ENCODE measurements at regions of chr3 and their contacts with region 1.

Region 1: GRCh38 chr3:157081681-157082210 is 78.2 kb downstream of the CCNL1 start:
- DNase-seq: peak; percentile 85
- H3K4me3 Mint-ChIP-seq: no peak overlapping the region
- H3K27ac Mint-ChIP-seq: no peak overlapping the region
- H3K4me1 Mint-ChIP-seq: peaks cover 46% of the 10 kb centered on the region
- H3K27me3 Mint-ChIP-seq: no peaks in the 10 kb centered on the region

Region 2: DNA sequence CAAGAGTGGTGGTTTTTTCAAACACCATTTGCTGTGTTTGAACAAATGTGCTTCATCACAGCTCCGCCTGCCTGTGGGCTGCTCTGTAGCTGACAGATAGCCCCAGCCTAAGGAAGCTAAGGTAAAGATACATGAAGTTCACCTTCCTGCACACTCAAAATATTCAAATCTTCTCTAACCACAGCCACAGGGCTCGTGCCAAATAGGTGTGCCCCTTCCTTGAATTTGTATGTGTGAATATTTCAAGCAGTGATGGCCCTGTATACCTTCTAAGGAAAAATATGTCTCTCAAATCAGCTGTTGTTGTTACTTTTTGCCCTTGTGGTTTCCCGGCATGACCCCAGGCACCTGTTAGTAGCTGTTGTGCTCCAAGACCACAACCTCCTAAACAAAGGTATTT is 14.6 kb before region 1 on chr3:
- CTCF ChIA-PET with region 1: interaction called, 11 read pairs
- POLR2A ChIA-PET with region 1: interaction called, 6 read pairs
- DNase-seq: peak; percentile 62
- H3K4me3 Mint-ChIP-seq: no peak overlapping the region
- H3K27ac Mint-ChIP-seq: peak overlapping the region; percentile 47
- H3K4me1 Mint-ChIP-seq: peaks cover 30% of the 10 kb centered on the region
- H3K27me3 Mint-ChIP-seq: peaks cover 3% of the 10 kb centered on the region

Region 3: DNA sequence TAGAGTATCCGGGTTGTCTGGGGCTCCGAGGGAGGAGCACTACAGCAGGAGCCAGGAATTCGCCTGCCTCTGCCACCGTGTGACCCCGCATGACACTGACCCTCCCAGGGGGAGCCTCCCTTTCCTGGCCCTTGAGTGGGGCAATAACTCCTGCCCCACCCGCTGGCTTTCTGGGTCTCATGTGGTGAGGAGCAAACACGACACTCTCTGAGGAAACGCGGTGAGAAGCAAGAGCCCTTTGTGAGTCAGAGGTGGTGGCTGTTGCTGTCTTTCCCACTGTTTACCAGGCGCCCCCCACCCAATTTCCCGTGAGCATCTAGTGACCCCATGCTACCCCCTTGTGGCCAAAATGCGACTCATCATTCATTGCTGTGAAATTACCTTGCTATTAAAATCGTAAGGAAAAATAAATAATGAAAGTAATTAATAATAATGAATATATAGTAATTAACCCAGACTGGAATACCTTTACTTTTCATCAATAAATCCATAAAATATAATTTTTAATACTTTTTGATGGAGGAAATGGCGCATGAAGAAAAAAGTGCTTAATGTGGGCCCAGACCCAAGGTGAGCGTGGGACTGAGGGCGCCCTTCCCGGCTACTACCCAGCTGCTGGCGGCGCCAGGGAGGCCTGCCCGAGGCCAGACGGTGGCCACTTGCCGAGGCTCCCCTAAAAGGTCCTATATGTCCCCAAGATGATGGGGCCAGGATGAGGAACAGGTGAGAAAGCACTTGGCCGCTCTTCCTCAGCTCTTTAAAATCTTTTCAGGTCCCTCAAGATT is 48.9 kb after region 1 on chr3:
- CTCF ChIA-PET with region 1: interaction called, 92 read pairs
- POLR2A ChIA-PET with region 1: interaction called, 381 read pairs
- DNase-seq: peak; percentile 82
- H3K4me3 Mint-ChIP-seq: peak overlapping the region; percentile 60
- H3K27ac Mint-ChIP-seq: peak overlapping the region; percentile 99
- H3K4me1 Mint-ChIP-seq: peaks cover 88% of the 10 kb centered on the region
- H3K27me3 Mint-ChIP-seq: no peaks in the 10 kb centered on the region

Region 4: DNA sequence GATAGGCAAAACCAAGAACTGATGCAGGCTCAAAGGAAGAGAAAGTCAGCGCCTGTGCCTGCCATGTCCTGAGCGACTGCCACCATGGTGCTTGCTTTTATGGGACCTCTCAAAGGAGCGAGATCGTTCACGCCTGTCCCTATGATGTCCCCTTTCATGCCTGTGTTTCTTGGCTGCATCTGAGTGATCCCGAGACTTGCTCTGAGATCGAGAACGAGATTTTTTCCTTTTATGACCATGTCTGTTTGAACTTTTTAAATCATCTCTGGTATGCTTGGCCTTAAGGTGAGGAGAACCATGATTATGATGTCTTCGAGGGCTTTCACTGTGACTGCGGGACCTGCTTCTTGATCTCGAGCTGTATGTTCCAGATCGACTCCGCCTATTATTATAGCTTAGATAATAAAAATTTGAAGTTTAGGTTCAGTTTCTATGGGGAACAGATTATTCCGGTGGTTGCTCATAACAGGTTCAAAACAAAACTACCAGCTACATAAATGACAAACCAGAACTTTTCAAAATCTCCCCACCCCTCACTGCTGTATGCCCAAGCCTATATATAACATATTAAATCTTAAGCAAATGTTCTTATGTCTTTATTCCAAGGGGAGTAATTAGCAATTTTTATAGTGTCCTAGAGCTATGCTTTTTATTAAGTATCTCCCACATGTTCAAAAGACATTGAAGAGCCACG is 66.6 kb after region 1 on chr3:
- CTCF ChIA-PET with region 1: no interaction called
- POLR2A ChIA-PET with region 1: no interaction called
- DNase-seq: no peak
- H3K4me3 Mint-ChIP-seq: no peak overlapping the region
- H3K27ac Mint-ChIP-seq: peak overlapping the region; percentile 54
- H3K4me1 Mint-ChIP-seq: peaks cover 62% of the 10 kb centered on the region
- H3K27me3 Mint-ChIP-seq: no peaks in the 10 kb centered on the region